ENCODE measurements at regions of chr6 and their contacts with region 1.

Region 1: GRCh38 chr6:56359201-56359899 is 112.0 kb upstream of the COL21A1 start:
- DNase-seq: peak; percentile 72
- H3K4me3 ChIP-seq: no peak overlapping the region
- H3K27ac ChIP-seq: no peak overlapping the region
- H3K27me3 ChIP-seq: no peaks in the 10 kb centered on the region
- CTCF ChIP-seq: peak; percentile 73

Region 2: DNA sequence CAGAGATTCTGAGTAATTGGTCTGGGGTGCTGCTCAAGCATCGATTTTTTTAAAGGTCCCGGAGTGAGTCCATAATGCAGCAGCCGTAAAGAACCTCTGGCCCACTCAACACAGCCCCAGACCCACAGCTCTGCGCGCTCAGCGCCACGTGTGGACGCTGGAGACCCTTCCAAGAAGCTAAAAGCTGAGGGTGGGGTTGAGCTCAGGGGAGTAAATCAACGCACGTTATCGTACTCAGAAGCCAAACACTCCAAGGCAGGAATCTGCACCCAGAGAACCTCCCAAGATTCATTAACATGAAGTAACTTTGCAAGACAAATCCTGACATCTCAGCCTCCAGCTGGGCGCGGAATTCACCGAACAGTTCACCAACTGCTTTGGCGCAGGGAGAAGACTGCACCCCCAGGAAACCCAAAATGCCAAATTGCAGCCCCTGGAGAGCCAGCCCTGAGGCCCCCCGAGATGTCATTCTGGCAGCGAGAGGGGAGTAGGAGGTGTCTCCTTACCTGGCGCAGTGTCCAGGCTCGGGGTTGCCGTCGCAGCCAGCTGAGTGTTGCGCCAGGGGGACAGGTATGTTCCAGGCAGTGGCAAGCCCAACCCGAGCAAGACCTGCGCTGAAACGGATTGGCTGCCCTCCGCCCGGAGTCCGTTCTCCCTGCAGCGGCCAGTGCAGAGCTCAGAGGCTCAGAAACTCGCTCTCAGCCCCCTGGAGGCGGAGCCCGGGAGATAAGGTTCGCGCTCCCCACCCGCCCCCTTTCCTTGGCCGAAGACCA is 112.3 kb before region 1 on chr6 and contains the start of gene COL21A1:
- in situ Hi-C with region 1: no loop called
- DNase-seq: no peak
- H3K4me3 ChIP-seq: peak within 1 kb of the TSS; percentile 63
- H3K27ac ChIP-seq: no peak within 1 kb of the TSS
- H3K27me3 ChIP-seq: no peaks in the 10 kb centered on the region
- CTCF ChIP-seq: peak; percentile 65

Region 3: DNA sequence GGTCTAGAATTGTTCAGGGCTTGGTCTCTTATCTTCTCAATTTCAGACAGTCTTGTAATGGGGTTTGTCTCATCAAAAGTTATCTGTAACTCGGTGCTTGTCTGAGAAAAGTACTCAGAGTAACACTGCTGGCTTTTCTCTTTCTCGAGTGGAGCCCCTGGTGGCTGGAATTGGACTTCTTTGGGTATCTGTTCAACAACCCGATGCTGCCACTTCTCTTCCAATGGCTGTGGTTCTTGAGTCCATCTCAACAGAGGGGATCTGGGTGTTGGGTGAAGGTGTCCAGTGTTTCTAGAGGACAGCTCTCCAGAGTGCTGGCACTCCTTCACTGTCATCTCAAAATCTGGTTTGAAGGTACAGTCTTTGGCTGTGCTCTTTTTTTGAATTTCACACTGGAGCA is 258.7 kb after region 1 on chr6:
- in situ Hi-C with region 1: loop called (anchors 25 kb)
- DNase-seq: no peak
- H3K4me3 ChIP-seq: no peak overlapping the region
- H3K27ac ChIP-seq: no peak overlapping the region
- H3K27me3 ChIP-seq: no peaks in the 10 kb centered on the region
- CTCF ChIP-seq: peak; percentile 48